ENCODE measurements at regions of chr2 and their contacts with region 1.

Region 1: DNA sequence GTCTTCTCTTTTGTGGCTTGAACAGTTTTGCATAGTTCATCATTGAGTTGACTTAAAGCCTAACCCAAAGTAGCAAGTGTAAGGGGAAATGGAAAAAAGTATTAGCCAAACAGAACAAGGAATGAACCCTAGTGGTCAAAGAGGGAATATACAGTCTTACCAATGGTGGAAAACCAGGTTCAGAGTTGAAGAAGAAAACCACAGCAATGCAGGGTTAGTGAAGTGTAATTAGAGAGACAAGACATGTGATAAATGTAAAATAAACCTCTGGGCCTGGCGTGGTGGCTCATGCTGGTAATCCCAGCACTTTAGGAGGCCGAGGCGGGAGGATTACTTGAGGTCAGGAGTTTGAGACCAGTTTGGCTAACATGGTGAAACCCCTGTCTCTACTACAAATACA is 2.4 kb downstream of the TTN start:
- DNase-seq: no peak
- ATAC-seq: peak in 1 of 2 donors; percentile 4

Region 2: GRCh38 chr2:177998006-177998405 is 806.8 kb before region 1 on chr2:
- intact Hi-C with region 1: no loop called
- DNase-seq: no peak
- ATAC-seq: no peak

Region 3: DNA sequence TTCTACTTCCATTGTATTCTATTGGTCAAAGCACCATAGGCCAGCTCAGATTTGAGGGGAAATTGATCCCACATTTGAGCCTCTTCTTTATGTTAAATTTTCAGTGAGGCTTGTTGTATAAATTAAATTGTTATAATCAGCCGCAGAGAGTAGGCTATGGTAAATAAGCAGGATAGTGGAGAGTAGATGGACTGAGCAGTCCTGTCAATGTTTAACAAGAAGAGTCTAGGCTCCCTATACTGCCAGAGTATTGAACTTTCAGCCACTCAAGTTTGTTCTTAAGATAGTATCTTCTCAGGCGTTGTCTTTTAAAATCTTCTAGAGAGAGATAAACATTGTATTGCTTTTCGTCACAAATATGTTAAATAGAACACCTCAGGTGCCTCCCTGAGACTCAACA is 454.7 kb before region 1 on chr2:
- intact Hi-C with region 1: no loop called
- DNase-seq: no peak
- ATAC-seq: no peak

Region 4: GRCh38 chr2:178863856-178864620 is 59.2 kb after region 1 on chr2:
- intact Hi-C with region 1: loop called (anchors 5 to 10 kb)
- DNase-seq: peak; percentile 80
- ATAC-seq: peak; percentile 84 to 85